Activated CD4-positive, alpha-beta T cell treated with anti-CD3 and anti-CD28 coated beads for 36 hours (primary cell): ENCODE measurements at regions of chr17 and their contacts with region 1.

Region 1: GRCh38 chr17:16353317-16354174 is at the start of gene CENPV:
- DNase-seq: peak; percentile 81
- ATAC-seq: peak; percentile 82
- H3K4me3 Mint-ChIP-seq: peak within 1 kb of the TSS; percentile 97
- H3K27ac Mint-ChIP-seq: peak within 1 kb of the TSS; percentile 84
- H3K4me1 Mint-ChIP-seq: peaks cover 22% of the 10 kb centered on the region
- H3K27me3 Mint-ChIP-seq: no peaks in the 10 kb centered on the region
- total RNA-seq, gene CENPV: 100 to 132 TPM

Region 2: GRCh38 chr17:16171616-16172015 is 181.9 kb before region 1 on chr17:
- CTCF ChIA-PET with region 1: no interaction called
- POLR2A ChIA-PET with region 1: no interaction called
- intact Hi-C with region 1: no loop called
- DNase-seq: no peak
- ATAC-seq: no peak
- H3K4me3 Mint-ChIP-seq: no peak overlapping the region
- H3K27ac Mint-ChIP-seq: no peak overlapping the region
- H3K4me1 Mint-ChIP-seq: peaks cover 9% of the 10 kb centered on the region
- H3K27me3 Mint-ChIP-seq: no peaks in the 10 kb centered on the region

Region 3: GRCh38 chr17:16285957-16286640 is 67.4 kb before region 1 on chr17:
- CTCF ChIA-PET with region 1: interaction called, 6 read pairs
- POLR2A ChIA-PET with region 1: no interaction called
- intact Hi-C with region 1: loop called (anchors 1 to 5 kb)
- DNase-seq: peak; percentile 90
- ATAC-seq: peak; percentile 94
- H3K4me3 Mint-ChIP-seq: peak overlapping the region; percentile 66
- H3K27ac Mint-ChIP-seq: peak overlapping the region; percentile 96
- H3K4me1 Mint-ChIP-seq: peaks cover 53% of the 10 kb centered on the region
- H3K27me3 Mint-ChIP-seq: no peaks in the 10 kb centered on the region

Region 4: DNA sequence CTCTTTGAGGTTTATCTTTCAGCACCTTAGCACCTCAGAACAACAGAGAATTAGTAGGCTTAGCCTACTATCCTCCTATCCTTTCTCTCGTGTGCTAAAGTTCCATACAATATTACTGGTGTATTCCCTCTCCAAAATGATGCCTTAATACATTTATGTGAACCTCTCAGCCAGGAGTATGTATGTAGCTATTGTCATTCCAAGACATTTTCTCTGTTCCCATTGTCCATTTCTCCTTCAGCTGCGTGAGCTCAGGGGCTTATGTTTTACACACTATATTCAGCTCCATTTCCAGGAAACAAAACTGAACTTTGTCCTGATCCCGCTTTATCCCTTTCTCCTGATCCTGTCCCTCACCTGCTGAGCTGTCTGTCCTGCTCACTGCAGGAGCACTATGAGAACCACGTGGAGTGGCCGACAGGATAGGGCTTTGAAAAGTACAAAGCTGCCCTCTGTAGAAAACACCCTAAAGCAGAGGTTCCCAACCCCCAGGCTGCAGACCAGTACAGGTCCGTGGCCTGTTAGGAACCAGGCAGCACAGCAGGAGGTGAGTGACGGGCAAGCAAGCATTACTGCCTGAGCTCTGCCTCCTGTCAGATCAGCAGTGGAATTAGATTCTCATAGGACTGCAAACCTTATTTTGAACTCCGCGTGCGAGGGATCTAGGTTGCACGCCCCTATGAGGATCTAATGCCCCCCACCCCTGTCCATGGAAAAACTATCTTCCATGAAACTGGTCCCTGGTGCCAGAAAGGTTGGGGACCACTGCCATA is 56.0 kb before region 1 on chr17:
- CTCF ChIA-PET with region 1: no interaction called
- POLR2A ChIA-PET with region 1: no interaction called
- intact Hi-C with region 1: no loop called
- DNase-seq: no peak
- ATAC-seq: no peak
- H3K4me3 Mint-ChIP-seq: no peak overlapping the region
- H3K27ac Mint-ChIP-seq: no peak overlapping the region
- H3K4me1 Mint-ChIP-seq: peaks cover 20% of the 10 kb centered on the region
- H3K27me3 Mint-ChIP-seq: no peaks in the 10 kb centered on the region

Region 5: DNA sequence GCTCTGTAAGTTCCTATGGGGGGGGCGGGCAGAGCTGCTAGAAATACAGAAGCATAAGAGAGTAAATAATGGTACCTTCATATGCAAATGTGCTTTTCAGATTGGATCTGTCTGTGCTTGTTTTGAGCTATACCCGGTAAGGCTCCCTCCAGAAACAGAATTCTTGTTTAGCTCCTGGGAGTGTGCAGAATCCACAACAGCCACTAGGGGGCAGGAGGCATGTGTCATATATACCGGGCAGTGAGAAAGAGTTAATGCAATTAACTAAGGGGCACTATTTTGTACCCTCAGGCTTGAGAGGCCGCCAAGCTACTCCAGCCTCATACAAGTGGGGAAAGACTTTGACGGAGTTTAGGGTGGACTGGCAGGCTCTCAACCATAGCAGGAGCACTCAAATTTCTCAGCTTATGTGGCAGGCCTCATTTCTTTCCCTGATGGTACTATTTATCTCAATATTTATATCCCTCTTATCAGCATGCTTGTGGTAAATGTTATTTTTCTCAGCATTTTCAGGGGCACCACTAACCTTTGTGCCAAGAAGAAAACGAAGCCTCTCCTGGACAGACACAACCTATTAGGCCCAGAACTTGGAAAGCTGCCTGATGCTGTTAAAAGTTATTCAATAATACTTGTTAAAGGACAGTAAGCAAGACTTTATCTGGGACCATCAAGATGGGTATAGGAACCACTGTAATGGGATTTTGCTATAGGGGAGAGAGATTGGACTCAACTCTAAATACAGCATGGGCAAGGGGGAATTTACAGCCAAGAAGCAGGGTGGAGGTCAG is 10.4 kb after region 1 on chr17:
- CTCF ChIA-PET with region 1: interaction called, 64 read pairs
- POLR2A ChIA-PET with region 1: no interaction called
- intact Hi-C with region 1: no loop called
- DNase-seq: peak; percentile 89
- ATAC-seq: peak; percentile 98
- H3K4me3 Mint-ChIP-seq: no peak overlapping the region
- H3K27ac Mint-ChIP-seq: no peak overlapping the region
- H3K4me1 Mint-ChIP-seq: no peaks in the 10 kb centered on the region
- H3K27me3 Mint-ChIP-seq: no peaks in the 10 kb centered on the region

Region 6: DNA sequence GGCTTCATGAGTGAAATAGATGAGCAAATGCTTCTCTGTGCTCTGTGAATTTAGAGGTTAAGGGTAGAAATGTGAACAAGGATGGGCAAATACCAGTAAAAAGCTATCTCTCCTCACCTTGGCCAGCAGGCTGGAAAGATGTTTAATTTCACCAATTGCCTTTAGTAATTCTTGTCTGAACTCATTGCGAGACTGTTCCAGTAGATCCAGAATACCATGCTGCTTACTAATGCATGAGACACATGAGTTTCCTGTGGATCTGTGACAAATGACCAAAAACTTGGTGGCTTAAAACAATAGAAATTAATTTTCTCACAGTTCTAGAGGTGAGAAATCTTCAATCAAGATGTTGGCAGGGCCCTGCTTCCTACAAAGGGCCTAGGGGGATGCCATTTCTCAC is 309.4 kb after region 1 on chr17:
- CTCF ChIA-PET with region 1: no interaction called
- POLR2A ChIA-PET with region 1: no interaction called
- intact Hi-C with region 1: no loop called
- DNase-seq: no peak
- ATAC-seq: no peak
- H3K4me3 Mint-ChIP-seq: no peak overlapping the region
- H3K27ac Mint-ChIP-seq: no peak overlapping the region
- H3K4me1 Mint-ChIP-seq: peaks cover 3% of the 10 kb centered on the region
- H3K27me3 Mint-ChIP-seq: peaks cover 17% of the 10 kb centered on the region